ENCODE measurements at regions of chr11 and their contacts with region 1.

Region 1: DNA sequence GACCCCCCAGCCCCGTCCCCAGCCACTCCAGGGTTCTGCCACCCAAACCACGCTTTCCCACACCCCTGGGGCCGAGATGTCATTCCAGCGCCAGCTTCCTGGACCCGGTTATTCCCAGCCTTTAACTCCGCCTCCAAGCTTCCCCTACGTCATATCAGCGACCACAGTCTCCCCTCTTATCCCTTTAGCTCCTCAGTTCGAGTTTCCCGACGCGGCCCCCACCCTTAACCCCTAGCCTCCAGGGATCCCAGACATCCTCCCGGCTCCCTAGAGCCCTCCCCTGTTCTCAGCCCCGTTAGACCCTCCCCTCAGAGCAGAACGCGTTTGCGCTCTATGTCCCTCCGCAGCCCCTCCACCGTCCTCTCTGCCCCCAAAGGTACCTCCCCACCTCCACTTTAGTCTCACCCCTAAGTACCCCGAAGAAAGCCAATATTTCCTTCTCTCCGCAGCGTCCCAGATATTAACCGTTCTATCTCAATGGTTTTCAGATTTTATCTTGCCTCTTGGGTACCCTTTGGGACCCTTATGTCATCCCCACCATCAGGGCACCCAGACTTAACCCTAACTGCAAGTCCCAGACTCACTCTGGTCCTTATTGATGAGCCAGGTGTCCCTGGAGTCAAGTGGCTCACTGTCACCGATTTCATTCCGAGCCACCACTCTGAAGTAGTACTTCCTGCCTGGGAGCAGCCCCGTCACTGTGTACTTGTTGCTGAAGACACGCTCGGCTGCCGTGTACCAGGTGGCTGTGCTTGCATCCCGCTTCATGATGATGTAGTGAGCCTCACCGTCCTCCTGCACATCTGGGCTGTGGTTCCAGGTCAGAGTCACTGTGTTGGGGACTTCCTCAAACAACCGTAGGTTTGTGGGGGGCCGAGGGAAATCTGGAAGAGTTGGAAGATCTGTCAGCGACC is 8.0 kb downstream of the TMEM86A start:
- DNase-seq: peak; percentile 82
- H3K4me3 ChIP-seq: peak overlapping the region; percentile 41 to 67 (median 58)
- H3K27ac ChIP-seq: peak overlapping the region; percentile 74 to 78 (median 74)
- H3K4me1 ChIP-seq: peaks cover 0 to 33% (median 24%) of the 10 kb centered on the region in 4 donors
- H3K27me3 ChIP-seq: no peaks in the 10 kb centered on the region
- CTCF ChIP-seq: no peak
- EP300 ChIP-seq: no peak
- POLR2A ChIP-seq: no peak

Region 2: DNA sequence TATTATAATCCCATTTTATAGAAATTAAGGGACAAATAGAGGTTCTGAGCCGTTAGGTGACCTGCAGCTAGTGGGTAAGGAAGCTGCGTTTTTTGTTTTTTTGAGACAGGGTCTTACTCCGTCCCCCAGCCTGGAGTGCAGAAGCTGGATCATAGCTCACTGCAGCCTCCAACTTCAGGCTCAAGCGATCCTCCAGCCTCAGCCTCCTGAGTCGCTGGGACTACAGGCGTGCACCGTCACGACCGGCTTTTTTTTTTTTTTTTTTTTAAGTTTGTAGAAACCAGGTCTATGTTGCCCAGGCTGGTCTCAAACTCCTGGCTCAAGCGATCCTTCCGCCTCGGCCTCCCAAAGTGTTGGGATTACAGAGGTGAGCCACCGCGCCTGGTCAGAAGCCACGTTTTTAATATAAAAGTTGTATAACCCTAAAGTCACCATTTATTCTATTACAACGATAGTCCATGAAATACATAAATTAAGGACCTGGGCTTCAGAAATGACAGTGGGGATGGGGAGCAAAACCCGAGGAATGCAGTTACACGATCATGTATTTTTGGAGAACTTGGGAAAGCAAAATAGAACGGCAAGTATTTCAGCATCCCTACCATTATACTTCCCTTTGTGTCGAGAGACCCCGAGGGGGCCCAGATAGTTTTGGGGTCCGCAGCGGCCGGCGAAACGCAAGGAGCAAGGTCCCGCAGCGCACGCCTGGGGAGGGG is 601.3 kb before region 1 on chr11:
- intact Hi-C with region 1: no loop called
- DNase-seq: no peak
- H3K4me3 ChIP-seq: peak overlapping the region; percentile 73 to 85 (median 82)
- H3K27ac ChIP-seq: peak overlapping the region; percentile 55 to 75 (median 72)
- H3K4me1 ChIP-seq: peaks cover 0 to 22% (median 12%) of the 10 kb centered on the region in 4 donors
- H3K27me3 ChIP-seq: no peaks in the 10 kb centered on the region
- CTCF ChIP-seq: no peak
- EP300 ChIP-seq: no peak
- POLR2A ChIP-seq: no peak

Region 3: GRCh38 chr11:18526521-18527296 is 179.9 kb before region 1 on chr11 and contains the start of gene TSG101:
- intact Hi-C with region 1: no loop called
- DNase-seq: peak; percentile 95
- H3K4me3 ChIP-seq: peak within 1 kb of the TSS; percentile 82 to 95 (median 90)
- H3K27ac ChIP-seq: peak within 1 kb of the TSS; percentile 88 to 95 (median 92)
- H3K4me1 ChIP-seq: peaks cover 0 to 27% (median 22%) of the 10 kb centered on the region in 4 donors
- H3K27me3 ChIP-seq: no peaks in the 10 kb centered on the region
- CTCF ChIP-seq: no peak
- EP300 ChIP-seq: peak in 1 of 4 donors; percentile 14
- POLR2A ChIP-seq: peak; percentile 91 to 93
- total RNA-seq, gene TSG101: 70.3 to 100 (median 89.8) TPM

Region 4: DNA sequence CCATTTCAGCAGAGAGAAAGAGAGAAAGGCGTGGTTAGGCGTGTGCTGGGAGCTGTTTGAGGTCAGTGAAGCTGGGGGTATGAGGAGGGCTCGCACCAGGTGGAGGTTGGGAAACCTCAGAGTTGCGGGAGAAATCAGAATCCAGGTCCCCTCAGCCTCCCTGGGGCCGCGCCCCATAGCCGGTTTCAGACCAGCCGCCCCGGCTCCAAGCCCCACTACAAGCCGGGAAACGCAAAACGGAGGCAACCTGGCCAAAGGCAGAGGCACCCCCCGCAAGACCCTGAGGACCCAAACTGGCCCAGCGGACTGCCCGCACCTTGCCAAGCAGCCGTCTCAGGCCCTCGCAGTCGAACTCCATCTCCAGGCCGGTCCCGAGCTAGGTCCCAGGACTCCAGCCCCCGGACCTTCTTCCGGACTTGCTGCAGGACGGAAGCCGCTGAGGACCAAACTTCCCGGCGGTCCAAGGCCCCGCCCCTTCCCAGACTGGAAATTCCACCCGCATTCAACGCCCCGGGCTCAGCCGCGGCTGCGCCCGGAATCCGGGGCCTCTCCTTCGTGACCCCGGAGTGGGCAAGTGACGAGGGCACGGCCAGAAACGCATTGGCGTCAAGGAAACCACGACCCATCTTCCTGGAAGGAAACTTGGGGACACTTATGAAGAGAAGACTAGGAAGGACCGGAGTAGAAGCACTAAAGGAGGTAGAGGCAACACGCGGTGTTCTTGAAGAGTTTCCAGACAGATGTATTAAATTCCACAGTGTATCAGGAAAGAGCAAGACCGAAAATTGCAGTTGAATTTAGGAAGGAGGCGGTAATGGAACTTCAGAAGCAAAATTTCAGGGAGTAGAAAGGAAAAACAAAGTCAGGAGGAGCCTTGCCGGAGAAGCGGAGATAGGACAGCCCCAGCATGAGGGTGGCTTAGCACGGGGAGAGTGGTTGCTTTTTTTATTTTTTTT is 118.0 kb before region 1 on chr11 and contains the start of gene UEVLD:
- intact Hi-C with region 1: loop called (anchors 5 kb)
- DNase-seq: peak; percentile 96
- H3K4me3 ChIP-seq: peak within 1 kb of the TSS; percentile 70 to 88 (median 84)
- H3K27ac ChIP-seq: peak within 1 kb of the TSS; percentile 85 to 88 (median 86)
- H3K4me1 ChIP-seq: peaks cover 0 to 40% (median 35%) of the 10 kb centered on the region in 4 donors
- H3K27me3 ChIP-seq: no peaks in the 10 kb centered on the region
- CTCF ChIP-seq: no peak
- EP300 ChIP-seq: peak in 1 of 4 donors; percentile 35
- POLR2A ChIP-seq: peak; percentile 72 to 75
- total RNA-seq, gene UEVLD: 22.3 to 40.3 (median 28.8) TPM

Measured in sigmoid colon (tissue), 7 donors.